CD8-positive, alpha-beta T cell (primary cell): ENCODE measurements at regions of chr9 and their contacts with region 1.

Region 1: GRCh38 chr9:12680341-12680740 is 12.8 kb upstream of the TYRP1 start:
- DNase-seq: no peak
- ATAC-seq: no peak
- H3K4me3 ChIP-seq: no peak overlapping the region
- H3K4me3 Mint-ChIP-seq: no peak overlapping the region
- H3K27ac ChIP-seq: no peak overlapping the region
- H3K27ac Mint-ChIP-seq: no peak overlapping the region
- H3K4me1 ChIP-seq: no peaks in the 10 kb centered on the region
- H3K4me1 Mint-ChIP-seq: no peaks in the 10 kb centered on the region
- H3K27me3 ChIP-seq: no peaks in the 10 kb centered on the region
- H3K27me3 Mint-ChIP-seq: no peaks in the 10 kb centered on the region
- CTCF ChIP-seq: no peak

Region 2: DNA sequence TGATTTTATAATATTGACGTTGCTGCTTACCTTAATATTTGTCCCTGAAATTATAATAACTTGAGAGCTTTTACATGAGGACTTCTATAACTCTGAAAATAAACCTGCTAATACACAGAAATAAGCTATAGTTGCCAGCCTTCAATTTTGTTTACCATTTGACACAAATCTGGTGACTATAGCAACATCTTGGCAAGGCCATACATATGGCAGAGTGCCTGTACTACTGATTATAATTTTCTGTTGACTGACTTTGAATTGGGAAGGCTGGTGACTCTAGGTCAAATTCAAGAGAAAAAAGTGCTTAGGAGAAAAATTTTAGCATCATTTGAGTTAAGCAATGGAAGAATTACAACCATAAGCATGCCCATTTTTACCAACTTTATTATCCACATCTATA is 1486.1 kb before region 1 on chr9:
- CTCF ChIA-PET with region 1: no interaction called
- POLR2A ChIA-PET with region 1: no interaction called
- intact Hi-C with region 1: no loop called
- DNase-seq: no peak
- ATAC-seq: no peak
- H3K4me3 ChIP-seq: no peak overlapping the region
- H3K4me3 Mint-ChIP-seq: no peak overlapping the region
- H3K27ac ChIP-seq: no peak overlapping the region
- H3K27ac Mint-ChIP-seq: no peak overlapping the region
- H3K4me1 ChIP-seq: no peaks in the 10 kb centered on the region
- H3K4me1 Mint-ChIP-seq: no peaks in the 10 kb centered on the region
- H3K27me3 ChIP-seq: no peaks in the 10 kb centered on the region
- H3K27me3 Mint-ChIP-seq: no peaks in the 10 kb centered on the region
- CTCF ChIP-seq: no peak

Region 3: GRCh38 chr9:12658531-12659209 is 21.7 kb before region 1 on chr9:
- CTCF ChIA-PET with region 1: no interaction called
- POLR2A ChIA-PET with region 1: no interaction called
- intact Hi-C with region 1: loop called in 1 of 2 experiments (anchors 2 kb)
- DNase-seq: peak in 1 of 9 experiments; percentile 16
- ATAC-seq: no peak
- H3K4me3 ChIP-seq: no peak overlapping the region
- H3K4me3 Mint-ChIP-seq: no peak overlapping the region
- H3K27ac ChIP-seq: no peak overlapping the region
- H3K27ac Mint-ChIP-seq: no peak overlapping the region
- H3K4me1 ChIP-seq: no peaks in the 10 kb centered on the region
- H3K4me1 Mint-ChIP-seq: no peaks in the 10 kb centered on the region
- H3K27me3 ChIP-seq: no peaks in the 10 kb centered on the region
- H3K27me3 Mint-ChIP-seq: no peaks in the 10 kb centered on the region
- CTCF ChIP-seq: no peak